Activated CD8-positive, alpha-beta T cell treated with anti-CD3 and anti-CD28 coated beads for 36 hours (primary cell): ENCODE measurements at regions of chr1 and their contacts with region 1.

Region 1: DNA sequence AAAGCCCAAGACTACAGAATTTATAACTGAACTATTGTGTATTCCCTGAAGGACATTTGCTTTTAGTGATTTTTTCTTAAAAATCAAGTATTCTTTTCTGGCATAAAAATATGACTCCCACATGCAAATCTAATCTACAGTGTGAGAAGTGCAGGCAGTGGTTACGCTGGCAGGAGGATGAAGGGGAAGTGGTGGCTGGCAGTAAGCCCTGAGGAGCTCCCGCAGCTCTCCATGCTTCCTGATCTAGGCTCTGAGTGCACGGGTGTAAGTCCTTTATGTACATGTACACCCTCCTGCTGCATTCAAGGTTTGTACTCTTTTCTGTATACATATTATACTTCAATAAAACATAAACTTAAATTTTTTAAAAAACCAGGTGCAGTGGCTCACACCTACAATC is 67.5 kb upstream of the PRDX6 start:
- DNase-seq: no peak
- ATAC-seq: no peak
- H3K4me3 Mint-ChIP-seq: no peak overlapping the region
- H3K27ac Mint-ChIP-seq: no peak overlapping the region
- H3K4me1 Mint-ChIP-seq: peaks cover 67% of the 10 kb centered on the region
- H3K27me3 Mint-ChIP-seq: no peaks in the 10 kb centered on the region
- CTCF ChIP-seq: no peak

Region 2: GRCh38 chr1:172818841-172819527 is 590.6 kb before region 1 on chr1:
- CTCF ChIA-PET with region 1: no interaction called
- POLR2A ChIA-PET with region 1: no interaction called
- intact Hi-C with region 1: loop called (anchors 10 kb)
- DNase-seq: peak; percentile 88
- ATAC-seq: peak; percentile 97
- H3K4me3 Mint-ChIP-seq: peak overlapping the region; percentile 43
- H3K27ac Mint-ChIP-seq: peak overlapping the region; percentile 83
- H3K4me1 Mint-ChIP-seq: peaks cover 47% of the 10 kb centered on the region
- H3K27me3 Mint-ChIP-seq: peaks cover 14% of the 10 kb centered on the region
- CTCF ChIP-seq: no peak

Region 3: DNA sequence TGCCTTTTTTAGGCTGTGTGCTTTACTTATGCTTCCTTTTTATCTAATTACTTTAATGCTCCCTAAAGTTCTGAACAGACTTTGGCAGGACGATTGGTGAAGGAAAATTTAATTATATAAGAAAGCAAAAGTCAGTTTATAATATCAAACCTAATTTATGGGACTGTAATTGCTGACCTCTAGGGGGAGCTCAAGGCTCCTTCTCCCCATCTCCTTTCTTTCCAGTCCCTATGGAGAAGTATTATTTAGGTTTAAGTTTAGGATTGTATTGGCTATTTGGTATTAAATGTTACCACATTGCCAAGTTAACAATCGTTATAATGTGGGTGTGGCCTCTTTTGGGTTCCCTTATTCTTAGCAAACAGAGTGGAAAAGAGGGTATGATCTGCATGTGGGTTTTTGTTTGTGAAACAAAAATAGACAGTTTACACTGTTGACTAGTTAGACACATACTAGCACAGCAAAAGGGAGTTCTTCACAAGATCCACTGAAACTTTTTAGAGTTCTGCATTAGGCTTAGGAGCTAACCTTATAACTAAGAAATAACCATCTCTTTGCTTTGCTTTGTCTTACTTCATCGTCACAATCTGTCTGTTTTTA is 154.3 kb before region 1 on chr1:
- CTCF ChIA-PET with region 1: no interaction called
- POLR2A ChIA-PET with region 1: interaction called, 3 read pairs
- intact Hi-C with region 1: loop called (anchors 10 kb)
- DNase-seq: peak; percentile 22
- ATAC-seq: peak; percentile 37
- H3K4me3 Mint-ChIP-seq: no peak overlapping the region
- H3K27ac Mint-ChIP-seq: no peak overlapping the region
- H3K4me1 Mint-ChIP-seq: peaks cover 2% of the 10 kb centered on the region
- H3K27me3 Mint-ChIP-seq: no peaks in the 10 kb centered on the region
- CTCF ChIP-seq: peak; percentile 96